ENCODE measurements at regions of chr6 and their contacts with region 1.

Region 1: DNA sequence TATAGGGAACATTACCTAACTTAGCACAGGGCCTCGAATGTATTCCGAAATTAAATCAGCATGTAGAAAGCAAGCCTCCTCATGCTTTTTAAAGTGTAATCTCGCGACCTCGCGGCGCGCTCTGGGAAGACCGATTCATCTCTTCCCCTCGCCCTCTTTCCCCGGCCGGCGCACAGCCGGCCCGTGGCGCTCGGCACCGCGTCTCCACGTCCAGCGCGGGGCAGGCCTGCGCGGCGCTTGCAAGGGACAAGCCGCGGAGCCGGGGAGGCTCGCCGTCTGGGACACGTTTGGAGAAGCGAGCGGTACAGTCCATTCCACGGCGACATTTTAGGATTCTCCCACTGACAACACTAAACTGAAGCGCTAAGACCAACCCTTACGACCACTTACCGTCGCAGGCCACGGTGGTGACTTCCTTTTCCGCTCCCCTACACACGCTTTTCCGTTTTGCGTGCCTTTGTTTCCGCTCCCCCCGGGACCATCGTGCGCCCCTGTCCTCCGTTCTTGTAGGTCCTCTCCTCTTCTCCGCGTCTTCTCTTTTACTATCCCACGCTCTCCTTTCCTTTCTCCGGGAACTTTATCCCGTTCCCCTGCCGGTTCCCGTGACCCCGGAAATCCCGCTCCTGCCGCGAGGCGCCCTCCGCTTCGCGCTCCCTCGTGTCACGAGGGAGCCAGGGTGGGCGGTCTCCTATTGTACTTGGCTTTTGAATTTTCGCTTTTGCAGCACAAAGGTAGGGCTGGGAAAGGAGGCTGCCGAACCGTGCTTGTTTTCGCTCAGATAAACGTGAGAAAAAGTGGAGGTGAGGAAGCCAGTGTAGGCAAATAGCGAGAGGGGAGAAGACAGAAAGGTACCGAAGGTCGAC is at the start of gene ECHDC1:
- DNase-seq: peak; percentile 81
- H3K4me3 Mint-ChIP-seq: no peak within 1 kb of the TSS
- H3K27ac Mint-ChIP-seq: no peak within 1 kb of the TSS
- H3K4me1 Mint-ChIP-seq: peaks cover 13% of the 10 kb centered on the region
- H3K27me3 Mint-ChIP-seq: no peaks in the 10 kb centered on the region
- total RNA-seq, gene ECHDC1: 40.1 to 41.4 TPM

Region 2: DNA sequence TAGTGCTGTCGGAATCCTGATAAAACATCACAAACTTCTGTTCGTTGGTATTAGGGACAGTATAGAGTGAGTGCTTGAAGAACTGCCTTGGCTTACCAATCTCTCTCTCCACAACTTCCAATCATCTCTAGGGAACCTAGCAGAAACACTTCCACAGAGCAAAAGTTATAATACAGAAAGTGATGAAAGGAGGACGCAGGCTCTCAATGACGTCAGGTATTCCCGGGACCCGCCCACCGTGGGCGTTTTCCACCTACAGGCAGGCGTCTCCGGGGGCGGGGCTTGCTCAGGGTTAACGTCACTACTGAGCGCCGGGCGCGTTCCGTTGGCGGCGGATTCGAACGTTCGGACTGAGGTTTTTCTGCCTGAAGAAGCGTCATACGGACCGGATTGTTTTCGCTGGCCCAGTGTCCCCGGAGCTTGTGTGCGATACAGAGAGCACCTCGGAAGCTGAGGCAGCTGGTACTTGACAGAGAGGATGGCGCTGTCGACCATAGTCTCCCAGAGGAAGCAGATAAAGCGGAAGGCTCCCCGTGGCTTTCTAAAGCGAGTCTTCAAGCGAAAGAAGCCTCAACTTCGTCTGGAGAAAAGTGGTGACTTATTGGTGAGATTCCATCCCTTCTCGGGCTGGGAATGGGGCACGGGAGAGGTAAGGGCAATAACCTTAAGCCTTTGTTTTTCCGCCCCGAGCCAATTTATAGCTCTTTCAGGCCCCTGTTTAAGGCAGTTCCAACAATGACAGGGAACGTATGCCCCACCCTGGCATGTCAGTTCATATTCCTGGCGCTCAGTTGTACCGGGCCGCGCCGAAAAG is 1003.2 kb before region 1 on chr6 and contains the start of gene CENPW:
- CTCF ChIA-PET with region 1: no interaction called
- intact Hi-C with region 1: loop called (anchors 5 kb)
- DNase-seq: peak; percentile 98
- H3K4me3 Mint-ChIP-seq: no peak within 1 kb of the TSS
- H3K27ac Mint-ChIP-seq: no peak within 1 kb of the TSS
- H3K4me1 Mint-ChIP-seq: peaks cover 14% of the 10 kb centered on the region
- H3K27me3 Mint-ChIP-seq: no peaks in the 10 kb centered on the region
- total RNA-seq, gene CENPW: 77.8 to 85.8 TPM

Region 3: GRCh38 chr6:127291495-127291894 is 51.7 kb before region 1 on chr6:
- CTCF ChIA-PET with region 1: no interaction called
- intact Hi-C with region 1: loop called (anchors 1 kb)
- DNase-seq: no peak
- H3K4me3 Mint-ChIP-seq: no peak overlapping the region
- H3K27ac Mint-ChIP-seq: no peak overlapping the region
- H3K4me1 Mint-ChIP-seq: peaks cover 47% of the 10 kb centered on the region
- H3K27me3 Mint-ChIP-seq: no peaks in the 10 kb centered on the region

Region 4: DNA sequence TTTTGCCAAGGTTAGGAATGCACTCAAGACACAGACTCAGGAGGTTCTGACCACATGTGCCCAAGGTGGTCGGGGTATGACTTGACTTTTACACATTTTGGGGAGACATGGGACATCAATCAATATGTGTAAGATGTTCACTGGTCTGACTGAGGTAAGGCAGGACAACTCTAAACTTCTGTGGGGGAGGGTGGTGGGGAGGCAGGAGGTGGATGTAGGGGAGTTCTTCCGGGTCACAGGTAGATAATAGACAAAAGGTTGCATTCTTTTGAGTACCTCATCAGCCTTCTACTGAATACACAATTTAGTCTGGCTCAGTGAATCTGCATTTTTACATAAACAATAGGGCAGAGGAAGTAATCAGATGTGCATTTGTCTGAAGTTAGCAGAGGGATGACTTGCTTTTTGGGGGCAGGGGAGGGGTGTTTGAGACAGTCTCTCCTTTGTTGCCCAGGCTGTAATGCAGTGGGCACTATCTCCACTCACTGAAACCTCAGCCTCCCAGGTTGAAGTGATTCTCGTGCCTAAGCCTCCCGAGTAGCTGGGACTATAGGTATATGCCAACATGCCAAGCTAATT is 10.7 kb before region 1 on chr6:
- CTCF ChIA-PET with region 1: interaction called, 3 read pairs
- intact Hi-C with region 1: loop called (anchors 1 kb)
- DNase-seq: no peak
- H3K4me3 Mint-ChIP-seq: no peak overlapping the region
- H3K27ac Mint-ChIP-seq: no peak overlapping the region
- H3K4me1 Mint-ChIP-seq: peaks cover 34% of the 10 kb centered on the region
- H3K27me3 Mint-ChIP-seq: no peaks in the 10 kb centered on the region

Region 5: GRCh38 chr6:127484212-127484858 is 141.2 kb after region 1 on chr6:
- CTCF ChIA-PET with region 1: interaction called, 3 read pairs
- intact Hi-C with region 1: loop called (anchors 1 kb)
- DNase-seq: peak; percentile 11
- H3K4me3 Mint-ChIP-seq: no peak overlapping the region
- H3K27ac Mint-ChIP-seq: no peak overlapping the region
- H3K4me1 Mint-ChIP-seq: peaks cover 28% of the 10 kb centered on the region
- H3K27me3 Mint-ChIP-seq: peaks cover 4% of the 10 kb centered on the region

Measured in activated naive CD4-positive, alpha-beta T cell treated with anti-CD3 and anti-CD28 coated beads for 36 hours (primary cell).